ENCODE measurements at regions of chr12 and their contacts with region 1.

Region 1: DNA sequence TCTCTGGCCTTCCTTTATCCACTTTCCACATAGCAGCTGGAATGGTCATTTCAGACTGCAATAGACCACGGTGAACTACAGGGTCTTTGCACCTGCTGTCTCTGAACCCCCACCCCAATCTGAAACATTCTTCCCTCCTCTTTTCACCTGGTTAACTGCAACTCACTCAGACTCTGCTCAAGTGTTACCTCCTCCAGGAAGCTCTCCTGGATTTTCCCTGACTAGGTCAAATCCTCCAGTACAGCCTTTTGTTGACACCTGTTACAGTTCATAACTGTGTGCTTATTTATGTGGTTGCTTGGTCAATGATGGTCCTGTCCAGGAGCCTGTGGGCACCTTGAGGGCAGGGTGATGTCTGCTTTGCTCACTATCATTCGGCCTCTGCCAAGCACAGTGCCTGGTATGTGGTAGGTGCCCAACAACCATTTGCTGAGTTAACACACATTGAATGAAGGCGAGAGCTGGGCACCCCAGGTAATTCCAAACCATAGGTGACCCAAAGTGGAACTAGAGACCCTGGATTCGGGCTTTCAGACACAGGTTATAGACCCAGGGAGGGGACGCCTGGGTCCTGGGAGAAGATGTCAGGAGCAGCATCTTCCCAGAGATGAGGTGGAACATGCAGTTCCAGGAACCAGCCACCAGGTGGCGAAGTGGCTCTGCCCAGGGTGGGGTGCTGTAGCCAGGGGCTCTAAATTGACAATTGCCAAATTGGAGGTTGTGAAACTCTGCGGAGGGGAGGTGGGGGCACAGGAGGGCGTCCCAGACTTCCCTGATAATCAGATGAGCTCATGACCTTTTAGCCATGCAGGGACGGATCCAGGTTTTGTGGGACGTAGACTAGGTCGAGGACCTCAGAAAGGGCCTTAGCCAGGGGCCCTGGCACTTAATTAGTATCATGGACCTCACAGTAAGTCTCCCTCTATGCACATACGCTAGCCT is 28.1 kb downstream of the TRPV4 start:
- DNase-seq: no peak
- H3K4me3 ChIP-seq: no peak overlapping the region
- H3K27ac ChIP-seq: no peak overlapping the region
- H3K27me3 ChIP-seq: no peaks in the 10 kb centered on the region
- CTCF ChIP-seq: peak; percentile 97

Region 2: GRCh38 chr12:109795023-109795422 is 10.1 kb before region 1 on chr12:
- CTCF ChIA-PET with region 1: interaction called, 32 read pairs
- POLR2A ChIA-PET with region 1: no interaction called
- DNase-seq: no peak
- H3K4me3 ChIP-seq: no peak overlapping the region
- H3K27ac ChIP-seq: no peak overlapping the region
- H3K27me3 ChIP-seq: no peaks in the 10 kb centered on the region
- CTCF ChIP-seq: no peak

Region 3: DNA sequence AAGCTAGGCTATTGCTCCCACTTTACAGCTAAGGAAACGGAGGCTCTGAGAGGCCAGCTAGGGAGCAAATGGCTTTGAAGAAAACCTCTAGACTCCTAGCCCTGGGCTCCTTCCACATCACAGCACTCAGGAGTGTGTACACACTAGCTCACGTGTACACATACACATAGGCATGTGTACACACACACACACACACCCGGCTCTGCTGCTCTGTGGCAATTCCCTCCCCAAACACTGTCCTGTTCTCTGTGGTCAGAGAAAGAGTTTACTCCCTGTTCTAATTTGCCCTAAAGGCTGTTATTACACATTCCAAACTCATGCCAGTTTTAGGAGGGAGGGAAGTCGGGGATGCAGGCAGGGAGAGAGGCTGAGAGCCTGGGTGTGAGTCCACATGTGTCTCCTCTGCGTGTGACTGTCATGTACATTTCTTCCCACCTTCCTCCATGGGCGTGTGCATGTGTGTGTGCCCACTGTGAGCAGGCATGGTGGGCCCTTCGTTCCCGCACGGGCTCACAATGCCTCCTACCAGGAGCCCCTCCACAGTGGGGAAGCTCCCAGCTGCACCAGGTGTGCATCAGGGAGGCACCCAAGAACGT is 13.9 kb after region 1 on chr12:
- CTCF ChIA-PET with region 1: interaction called, 14 read pairs
- POLR2A ChIA-PET with region 1: no interaction called
- DNase-seq: no peak
- H3K4me3 ChIP-seq: no peak overlapping the region
- H3K27ac ChIP-seq: no peak overlapping the region
- H3K27me3 ChIP-seq: peaks cover 3% of the 10 kb centered on the region
- CTCF ChIP-seq: no peak

Region 4: DNA sequence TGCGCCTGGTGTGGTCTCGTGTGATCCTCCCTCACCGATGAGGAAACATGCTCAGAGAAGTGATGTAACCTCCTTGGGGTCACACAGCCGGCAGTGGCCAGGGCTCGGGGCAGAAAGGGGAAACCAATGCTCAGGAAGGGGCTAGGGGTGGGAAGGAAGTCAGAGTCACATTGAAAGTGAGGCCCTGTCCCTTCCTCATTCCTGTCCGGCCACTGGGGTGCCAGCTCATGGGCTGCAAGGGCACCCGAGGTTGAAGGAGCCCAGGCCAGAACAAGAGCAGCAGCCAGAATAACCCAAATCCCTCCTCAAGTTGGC is 23.1 kb after region 1 on chr12:
- CTCF ChIA-PET with region 1: interaction called, 12 read pairs
- POLR2A ChIA-PET with region 1: no interaction called
- DNase-seq: no peak
- H3K4me3 ChIP-seq: no peak overlapping the region
- H3K27ac ChIP-seq: no peak overlapping the region
- H3K27me3 ChIP-seq: no peaks in the 10 kb centered on the region
- CTCF ChIP-seq: no peak

Region 5: DNA sequence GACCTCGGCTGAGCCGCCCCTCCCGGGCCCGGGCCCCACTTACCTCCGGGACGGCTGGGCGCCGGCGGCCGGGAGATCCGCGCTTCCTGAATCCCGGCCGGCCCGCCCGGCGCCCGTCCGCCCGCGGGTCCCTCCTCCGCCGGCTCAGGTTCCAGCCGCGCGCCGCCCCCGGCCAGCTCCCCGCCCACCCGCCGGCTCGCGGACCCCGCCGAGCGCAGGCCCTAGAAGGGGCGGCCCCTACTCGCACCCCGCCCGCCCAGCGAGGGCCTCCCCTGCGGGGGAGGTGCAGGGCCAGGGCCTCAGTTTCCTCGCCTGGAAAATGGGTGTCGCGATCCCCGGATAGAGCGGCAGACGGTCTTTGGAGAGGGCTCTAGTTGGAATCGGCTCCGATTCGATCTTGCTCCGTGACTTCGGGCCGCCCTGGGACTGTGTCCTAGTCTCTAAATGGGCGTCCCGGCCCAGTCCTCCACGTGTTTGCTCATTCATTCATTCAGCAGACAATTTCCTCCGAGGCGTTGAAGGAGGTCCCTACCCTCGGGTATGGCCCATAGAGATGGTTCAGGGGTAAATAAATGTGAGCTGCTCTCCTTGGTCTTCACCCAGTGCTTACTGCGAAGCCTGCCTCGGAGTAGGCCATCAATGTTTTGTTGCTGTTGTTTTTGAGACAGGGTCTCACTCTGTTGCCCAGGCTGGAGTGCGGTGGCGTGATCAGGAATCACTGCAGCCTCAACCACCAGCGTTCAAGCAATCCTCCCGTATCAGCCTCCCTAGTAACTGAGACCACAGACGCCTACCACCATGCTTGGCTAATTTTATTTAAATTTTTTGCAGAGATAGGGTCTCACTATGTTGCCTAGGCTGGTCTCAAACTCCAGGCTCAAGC is 28.5 kb after region 1 on chr12 and contains the start of gene TRPV4:
- CTCF ChIA-PET with region 1: interaction called, 23 read pairs
- POLR2A ChIA-PET with region 1: no interaction called
- DNase-seq: no peak
- H3K4me3 ChIP-seq: peak within 1 kb of the TSS; percentile 70
- H3K27ac ChIP-seq: no peak within 1 kb of the TSS
- H3K27me3 ChIP-seq: no peaks in the 10 kb centered on the region
- CTCF ChIP-seq: no peak
- polyA plus RNA-seq, gene TRPV4: 5.2 and 6.8 TPM in 2 replicates

Region 6: GRCh38 chr12:109858764-109859163 is 53.7 kb after region 1 on chr12:
- CTCF ChIA-PET with region 1: interaction called, 20 read pairs
- POLR2A ChIA-PET with region 1: no interaction called
- DNase-seq: no peak
- H3K4me3 ChIP-seq: no peak overlapping the region
- H3K27ac ChIP-seq: peak overlapping the region; percentile 21
- H3K27me3 ChIP-seq: no peaks in the 10 kb centered on the region
- CTCF ChIP-seq: no peak

Region 7: DNA sequence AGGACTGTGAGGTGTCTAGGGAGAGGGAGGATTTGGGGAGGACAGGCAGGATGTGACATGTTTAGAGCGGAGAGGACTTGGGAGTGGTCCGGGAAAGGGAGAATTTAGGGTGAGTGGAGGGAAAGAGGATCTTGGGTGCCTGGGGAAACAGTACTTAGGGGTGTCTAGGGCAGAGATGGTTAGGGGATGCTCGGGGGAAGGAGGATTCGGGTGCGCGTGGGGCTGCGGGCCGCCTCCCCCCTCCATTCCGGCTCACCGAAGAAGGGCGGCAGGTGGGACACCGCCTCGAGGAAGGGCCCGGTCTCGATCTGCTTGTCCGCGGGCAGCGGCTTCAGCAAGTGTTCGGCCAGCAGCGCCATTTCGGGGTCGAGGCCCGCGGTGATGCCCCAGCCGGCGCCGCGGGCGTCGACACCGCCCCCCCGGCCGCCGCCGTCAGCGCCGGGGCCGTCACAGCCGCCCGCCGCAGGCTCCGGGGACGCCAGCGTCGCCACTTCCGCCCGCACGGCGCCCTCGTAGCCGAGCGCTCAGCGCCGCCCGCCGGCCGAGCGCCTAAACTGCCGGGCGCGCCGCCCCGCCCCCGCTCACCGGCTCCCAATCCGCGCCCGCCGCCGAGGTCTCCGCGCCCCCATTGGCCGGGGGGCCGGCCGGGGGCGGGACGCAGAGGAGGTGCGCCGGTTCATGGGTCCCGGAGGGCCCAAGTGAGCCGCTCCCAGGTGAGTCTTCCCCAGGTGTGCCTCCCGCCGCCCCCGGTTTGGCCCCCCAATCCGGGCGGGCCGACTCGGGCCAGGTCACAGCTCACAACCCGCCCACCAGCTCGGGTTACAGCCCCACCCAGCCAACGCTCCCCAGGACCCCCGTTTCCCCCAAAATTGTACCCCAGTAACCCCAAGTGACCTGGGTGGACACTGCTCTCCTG is 75.2 kb after region 1 on chr12 and contains the start of gene GLTP:
- CTCF ChIA-PET with region 1: interaction called, 13 read pairs
- POLR2A ChIA-PET with region 1: no interaction called
- DNase-seq: no peak
- H3K4me3 ChIP-seq: peak within 1 kb of the TSS; percentile 89
- H3K27ac ChIP-seq: peak within 1 kb of the TSS; percentile 11
- H3K27me3 ChIP-seq: no peaks in the 10 kb centered on the region
- CTCF ChIP-seq: 0 out of 2 replicates have a peak, but pooled peaks have one; percentile 19
- polyA plus RNA-seq, gene GLTP: 28.8 and 30.3 TPM in 2 replicates

Region 8: DNA sequence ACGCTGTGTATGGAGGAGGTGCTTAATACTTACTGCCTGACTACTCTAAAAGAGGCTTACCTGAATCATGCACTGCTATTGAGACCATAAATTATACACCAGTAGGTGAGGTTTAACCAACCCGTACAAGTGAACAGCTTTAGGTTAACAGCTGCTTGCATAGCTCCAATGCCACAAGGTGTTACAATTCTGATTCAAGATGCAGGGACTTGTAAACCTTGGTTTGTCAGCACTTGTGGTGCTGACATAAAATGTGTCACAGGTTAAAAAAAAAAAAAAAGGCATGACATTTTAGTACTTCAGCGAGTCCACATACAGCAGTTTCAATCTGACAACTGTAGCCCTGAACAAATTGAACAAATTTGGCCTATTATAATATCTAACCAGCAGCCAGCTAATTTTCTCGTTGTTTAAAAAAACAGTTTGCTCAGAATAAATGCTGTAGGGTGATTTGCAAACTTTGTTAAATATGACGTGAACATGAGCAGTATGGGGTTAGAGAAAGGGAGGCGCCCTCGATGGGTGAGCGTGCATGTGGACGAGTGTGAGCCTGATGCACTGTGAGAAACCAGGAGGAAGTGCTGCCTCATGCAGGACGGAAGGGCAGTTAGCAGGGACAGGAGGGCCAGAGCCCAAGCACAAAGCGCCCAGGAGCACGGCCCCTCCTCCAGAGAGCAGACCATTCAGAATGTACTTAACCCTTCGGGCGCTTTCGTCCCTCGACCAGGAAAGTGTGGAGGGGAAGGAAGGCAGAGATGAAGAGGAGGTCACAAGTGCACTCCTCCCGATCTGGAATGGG is 139.7 kb after region 1 on chr12:
- CTCF ChIA-PET with region 1: no interaction called
- POLR2A ChIA-PET with region 1: no interaction called
- DNase-seq: no peak
- H3K4me3 ChIP-seq: no peak overlapping the region
- H3K27ac ChIP-seq: peak overlapping the region; percentile 33
- H3K27me3 ChIP-seq: no peaks in the 10 kb centered on the region
- CTCF ChIP-seq: no peak